ENCODE measurements at regions of chr16 and their contacts with region 1.

Region 1: GRCh38 chr16:27972500-27972899 is 91.0 kb downstream of the GSG1L start:
- DNase-seq: peak in 1 of 2 experiments; percentile 53
- H3K4me3 ChIP-seq: no peak overlapping the region
- H3K27ac ChIP-seq: no peak overlapping the region
- H3K4me1 ChIP-seq: no peaks in the 10 kb centered on the region
- H3K27me3 ChIP-seq: no peaks in the 10 kb centered on the region; a peak in 1 of 7 replicates
- CTCF ChIP-seq: peak; percentile 10 to 81 (median 80)
- EP300 ChIP-seq: no peak
- POLR2A ChIP-seq: no peak
- RAD21 ChIP-seq: peak; percentile 85 to 89

Region 2: GRCh38 chr16:27928542-27928941 is 44.0 kb before region 1 on chr16:
- CTCF ChIA-PET with region 1: no interaction called
- POLR2A ChIA-PET with region 1: no interaction called
- DNase-seq: no peak
- H3K4me3 ChIP-seq: no peak overlapping the region
- H3K27ac ChIP-seq: no peak overlapping the region
- H3K4me1 ChIP-seq: no peaks in the 10 kb centered on the region
- H3K27me3 ChIP-seq: no peaks in the 10 kb centered on the region
- CTCF ChIP-seq: no peak
- EP300 ChIP-seq: no peak
- POLR2A ChIP-seq: no peak
- RAD21 ChIP-seq: no peak

Region 3: DNA sequence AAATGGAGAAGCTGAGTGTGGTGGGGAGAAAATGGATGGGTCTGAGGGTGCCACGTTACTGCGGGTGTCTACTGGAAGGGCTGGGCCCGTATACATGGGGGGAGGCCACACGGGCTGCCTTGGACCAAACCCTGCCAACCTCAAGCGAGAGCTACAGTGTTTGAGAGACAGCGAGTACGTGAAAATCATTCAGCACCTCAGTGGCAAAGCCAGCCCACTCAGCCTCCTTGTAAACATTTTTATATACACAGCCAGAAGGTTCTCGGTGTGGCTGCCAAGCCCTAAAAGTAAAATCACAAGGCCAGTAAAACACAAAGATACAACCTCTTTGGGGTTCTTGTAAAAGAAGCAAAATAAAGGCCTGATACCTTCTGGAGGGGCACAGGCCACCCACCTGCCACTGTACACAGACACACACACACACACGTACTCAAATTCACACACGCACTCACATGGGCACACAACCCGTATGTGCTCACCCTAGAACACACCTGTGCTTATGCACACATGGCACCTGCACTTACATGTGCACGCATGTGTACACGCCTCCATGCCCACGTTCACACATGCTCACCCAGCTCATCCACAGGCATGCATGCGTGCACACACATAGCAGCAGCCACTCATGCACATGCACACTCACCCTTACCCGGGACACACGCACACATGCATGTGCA is 11.7 kb before region 1 on chr16:
- CTCF ChIA-PET with region 1: interaction called, 17 read pairs
- POLR2A ChIA-PET with region 1: no interaction called
- DNase-seq: no peak
- H3K4me3 ChIP-seq: no peak overlapping the region
- H3K27ac ChIP-seq: no peak overlapping the region
- H3K4me1 ChIP-seq: no peaks in the 10 kb centered on the region
- H3K27me3 ChIP-seq: no peaks in the 10 kb centered on the region
- CTCF ChIP-seq: no peak
- EP300 ChIP-seq: no peak
- POLR2A ChIP-seq: no peak
- RAD21 ChIP-seq: no peak

Region 4: DNA sequence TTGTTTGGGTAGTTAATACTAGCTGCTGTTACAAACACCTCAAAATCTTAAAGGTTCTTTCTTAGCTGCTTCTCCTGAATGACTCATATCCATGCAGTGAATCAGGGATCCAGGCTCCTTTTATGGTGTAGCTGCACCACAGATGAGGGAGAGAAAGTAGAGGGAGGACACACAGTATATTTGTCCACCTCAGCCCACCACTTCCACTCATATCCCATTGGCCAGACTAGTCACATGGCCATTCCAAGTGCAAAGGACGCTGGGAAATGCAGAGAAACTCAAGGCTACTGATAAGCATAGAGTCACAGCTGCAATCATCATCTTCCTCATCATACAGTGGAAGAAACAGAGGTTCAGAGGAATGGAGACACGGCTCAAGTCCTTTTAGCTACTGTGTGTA is 27.2 kb after region 1 on chr16:
- CTCF ChIA-PET with region 1: interaction called, 11 read pairs
- POLR2A ChIA-PET with region 1: no interaction called
- DNase-seq: no peak
- H3K4me3 ChIP-seq: no peak overlapping the region
- H3K27ac ChIP-seq: no peak overlapping the region
- H3K4me1 ChIP-seq: no peaks in the 10 kb centered on the region
- H3K27me3 ChIP-seq: no peaks in the 10 kb centered on the region
- CTCF ChIP-seq: no peak
- EP300 ChIP-seq: no peak
- POLR2A ChIP-seq: no peak
- RAD21 ChIP-seq: no peak

Region 5: DNA sequence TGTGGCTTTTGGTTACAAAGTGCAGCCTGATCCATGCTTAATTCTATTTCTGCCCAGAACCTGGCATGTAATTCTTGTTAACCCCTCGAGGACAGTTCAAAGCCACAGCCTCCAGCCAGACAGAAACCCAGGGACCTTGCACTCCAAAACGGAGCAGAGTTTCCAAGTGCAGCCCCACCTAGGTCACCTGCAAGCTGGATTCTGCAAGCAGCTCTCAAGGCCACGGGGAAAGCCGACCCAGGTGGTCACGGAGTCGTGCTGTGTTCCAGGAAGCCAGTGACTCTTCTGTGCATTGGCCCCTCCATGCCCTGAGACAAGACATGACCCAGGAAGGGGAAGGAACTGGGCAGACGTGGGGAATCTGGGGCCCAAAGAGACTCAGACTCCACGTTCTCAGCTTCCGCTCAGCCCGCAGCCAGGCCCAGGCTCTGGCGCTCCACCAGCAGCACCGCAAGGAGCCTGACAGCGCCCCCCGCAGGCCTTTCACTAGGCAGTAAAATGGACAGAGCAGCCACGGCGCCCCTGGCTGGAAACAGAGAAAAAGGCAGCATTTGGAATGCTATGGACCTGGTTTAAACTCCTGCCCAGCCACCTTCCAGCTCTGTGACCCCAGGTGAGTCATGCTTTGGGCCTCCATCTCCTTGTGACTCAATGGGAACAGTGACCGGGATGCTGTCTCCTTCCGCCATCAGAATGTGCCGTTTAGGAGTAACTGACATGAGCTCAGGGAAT is 118.3 kb after region 1 on chr16:
- CTCF ChIA-PET with region 1: interaction called, 23 read pairs
- POLR2A ChIA-PET with region 1: no interaction called
- DNase-seq: peak; percentile 66 to 88
- H3K4me3 ChIP-seq: no peak overlapping the region
- H3K27ac ChIP-seq: no peak overlapping the region
- H3K4me1 ChIP-seq: peaks cover 0 to 26% (median 13%) of the 10 kb centered on the region in 4 experiments; a peak in 6 of 7 replicates
- H3K27me3 ChIP-seq: no peaks in the 10 kb centered on the region
- CTCF ChIP-seq: peak; percentile 82 to 99 (median 95)
- EP300 ChIP-seq: no peak
- POLR2A ChIP-seq: no peak
- RAD21 ChIP-seq: peak; percentile 60 to 71

Measured in H1 (cell line).